ENCODE measurements at regions of chr3 and their contacts with region 1.

Region 1: GRCh38 chr3:125496701-125497100 is 23.3 kb downstream of the SNX4 start:
- DNase-seq: no peak
- ATAC-seq: no peak
- H3K4me3 Mint-ChIP-seq: no peak overlapping the region
- H3K27ac Mint-ChIP-seq: no peak overlapping the region
- H3K4me1 Mint-ChIP-seq: peaks cover 0 to 3% (median 1%) of the 10 kb centered on the region in 4 donors
- H3K27me3 Mint-ChIP-seq: no peaks in the 10 kb centered on the region

Region 2: DNA sequence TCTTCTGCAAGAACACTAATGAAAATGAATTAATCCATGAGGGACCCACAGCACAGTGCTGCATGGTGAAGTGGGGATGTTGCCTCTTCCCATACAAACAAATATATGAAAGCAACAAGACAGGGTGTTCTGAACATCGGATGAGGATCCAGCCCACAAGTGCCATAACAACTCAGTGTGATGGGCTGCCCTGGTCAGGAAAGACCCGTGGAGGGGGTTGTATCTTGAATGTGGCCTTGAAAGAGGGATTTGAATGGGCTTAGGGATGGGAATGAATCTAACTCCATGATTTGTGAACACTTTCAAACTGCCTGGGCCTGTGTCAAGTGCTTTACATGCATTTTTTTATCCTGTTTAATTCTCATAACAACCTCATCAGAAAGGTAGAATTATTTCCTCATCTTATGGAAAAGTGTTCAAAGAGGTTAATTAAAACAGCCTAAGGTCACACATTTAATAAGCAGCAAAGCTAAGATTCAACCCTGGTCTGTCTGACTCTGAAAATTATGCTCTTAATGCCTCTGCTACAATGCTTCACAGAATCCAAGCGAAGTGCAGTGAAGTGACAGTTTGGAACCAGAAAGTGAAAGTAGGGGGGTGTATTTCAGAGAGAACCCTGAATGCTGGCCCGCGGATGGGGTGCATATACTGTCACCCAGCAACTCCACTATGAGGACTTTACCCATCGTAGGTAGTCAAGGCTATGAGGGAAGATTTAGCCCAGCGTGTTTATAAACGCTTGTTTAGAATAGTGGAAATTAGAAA is 375.3 kb before region 1 on chr3:
- POLR2A ChIA-PET with region 1: interaction called, 10 read pairs
- DNase-seq: peak in 6 of 10 donors; percentile 5 to 49 (median 30)
- ATAC-seq: peak; percentile 84 to 87
- H3K4me3 Mint-ChIP-seq: peak overlapping the region; percentile 44 to 81 (median 72)
- H3K27ac Mint-ChIP-seq: peak overlapping the region; percentile 13 to 90 (median 62)
- H3K4me1 Mint-ChIP-seq: peaks cover 23 to 54% (median 52%) of the 10 kb centered on the region in 4 donors
- H3K27me3 Mint-ChIP-seq: no peaks in the 10 kb centered on the region

Measured in naive thymus-derived CD8-positive, alpha-beta T cell (primary cell).